ENCODE measurements at regions of chr6 and their contacts with region 1.

Region 1: DNA sequence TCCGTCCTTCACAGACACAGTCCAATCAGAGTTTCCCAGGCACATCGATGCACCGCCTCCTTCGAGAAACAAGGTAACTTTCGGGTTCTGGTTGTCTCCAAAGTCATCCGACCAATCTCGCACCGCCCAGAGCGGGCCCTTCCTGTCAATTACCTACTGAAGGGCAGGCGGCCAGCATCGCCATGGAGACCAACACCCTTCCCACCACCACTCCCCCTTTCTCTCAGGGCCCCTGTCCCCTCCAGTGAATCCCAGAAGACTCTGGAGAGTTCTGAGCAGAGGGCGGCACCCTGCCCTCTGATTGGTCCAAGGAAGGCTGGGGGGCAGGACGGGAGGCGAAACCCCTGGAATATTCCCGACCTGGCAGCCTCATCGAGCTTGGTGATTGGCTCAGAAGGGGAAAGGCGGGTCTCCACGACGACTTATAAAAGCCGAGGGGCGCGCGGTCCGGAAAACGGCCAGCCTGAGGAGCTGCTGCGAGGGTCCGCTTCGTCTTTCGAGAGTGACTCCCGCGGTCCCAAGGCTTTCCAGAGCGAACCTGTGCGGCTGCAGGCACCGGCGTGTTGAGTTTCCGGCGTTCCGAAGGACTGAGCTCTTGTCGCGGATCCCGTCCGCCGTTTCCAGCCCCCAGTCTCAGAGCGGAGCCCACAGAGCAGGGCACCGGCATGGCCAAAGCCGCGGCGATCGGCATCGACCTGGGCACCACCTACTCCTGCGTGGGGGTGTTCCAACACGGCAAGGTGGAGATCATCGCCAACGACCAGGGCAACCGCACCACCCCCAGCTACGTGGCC is at the start of gene HSPA1B:
- DNase-seq: peak; percentile 99 to 100 (median 100)
- ATAC-seq: peak; percentile 86
- H3K4me3 ChIP-seq: peak within 1 kb of the TSS; percentile 56
- H3K27ac ChIP-seq: peak within 1 kb of the TSS; percentile 78
- H3K4me1 ChIP-seq: peaks cover 41% of the 10 kb centered on the region in 2 experiments
- H3K27me3 ChIP-seq: no peaks in the 10 kb centered on the region
- CTCF ChIP-seq: peak in 1 of 3 experiments; percentile 15; a peak in 2 of 6 replicates
- EP300 ChIP-seq: peak; percentile 89
- POLR2A ChIP-seq: peak; percentile 100
- RAD21 ChIP-seq: peak; percentile 34 to 39; a peak in 2 of 4 replicates
- polyA plus RNA-seq, gene HSPA1B: 0.27 to 0.62 TPM

Region 2: GRCh38 chr6:31652925-31653718 is 174.4 kb before region 1 on chr6:
- CTCF ChIA-PET with region 1: no interaction called
- POLR2A ChIA-PET with region 1: interaction called, 16 read pairs
- in situ Hi-C with region 1: no loop called
- intact Hi-C with region 1: no loop called
- DNase-seq: peak; percentile 94 to 99 (median 96)
- ATAC-seq: peak; percentile 83
- H3K4me3 ChIP-seq: peak overlapping the region; percentile 73
- H3K27ac ChIP-seq: peak overlapping the region; percentile 98
- H3K4me1 ChIP-seq: peaks cover 22 to 26% of the 10 kb centered on the region in 2 experiments
- H3K27me3 ChIP-seq: no peaks in the 10 kb centered on the region
- CTCF ChIP-seq: peak; percentile 43 to 72 (median 54)
- EP300 ChIP-seq: no peak; the same call in 1 of the 2 replicates
- POLR2A ChIP-seq: peak; percentile 98
- RAD21 ChIP-seq: peak in 1 of 2 experiments; percentile 52; a peak in 2 of 4 replicates

Region 3: GRCh38 chr6:31729515-31729978 is 97.9 kb before region 1 on chr6:
- CTCF ChIA-PET with region 1: no interaction called
- POLR2A ChIA-PET with region 1: interaction called, 13 read pairs
- in situ Hi-C with region 1: no loop called
- intact Hi-C with region 1: loop called (anchors 2 kb)
- DNase-seq: peak; percentile 91 to 97 (median 94)
- ATAC-seq: peak; percentile 84
- H3K4me3 ChIP-seq: peak overlapping the region; percentile 65
- H3K27ac ChIP-seq: peak overlapping the region; percentile 75
- H3K4me1 ChIP-seq: peaks cover 53 to 67% of the 10 kb centered on the region in 2 experiments
- H3K27me3 ChIP-seq: no peaks in the 10 kb centered on the region
- CTCF ChIP-seq: peak; percentile 12 to 99 (median 95); a peak in 5 of 6 replicates
- EP300 ChIP-seq: no peak; the same call in 1 of the 2 replicates
- POLR2A ChIP-seq: no peak; the same call in 1 of the 2 replicates
- RAD21 ChIP-seq: peak; percentile 99

Region 4: DNA sequence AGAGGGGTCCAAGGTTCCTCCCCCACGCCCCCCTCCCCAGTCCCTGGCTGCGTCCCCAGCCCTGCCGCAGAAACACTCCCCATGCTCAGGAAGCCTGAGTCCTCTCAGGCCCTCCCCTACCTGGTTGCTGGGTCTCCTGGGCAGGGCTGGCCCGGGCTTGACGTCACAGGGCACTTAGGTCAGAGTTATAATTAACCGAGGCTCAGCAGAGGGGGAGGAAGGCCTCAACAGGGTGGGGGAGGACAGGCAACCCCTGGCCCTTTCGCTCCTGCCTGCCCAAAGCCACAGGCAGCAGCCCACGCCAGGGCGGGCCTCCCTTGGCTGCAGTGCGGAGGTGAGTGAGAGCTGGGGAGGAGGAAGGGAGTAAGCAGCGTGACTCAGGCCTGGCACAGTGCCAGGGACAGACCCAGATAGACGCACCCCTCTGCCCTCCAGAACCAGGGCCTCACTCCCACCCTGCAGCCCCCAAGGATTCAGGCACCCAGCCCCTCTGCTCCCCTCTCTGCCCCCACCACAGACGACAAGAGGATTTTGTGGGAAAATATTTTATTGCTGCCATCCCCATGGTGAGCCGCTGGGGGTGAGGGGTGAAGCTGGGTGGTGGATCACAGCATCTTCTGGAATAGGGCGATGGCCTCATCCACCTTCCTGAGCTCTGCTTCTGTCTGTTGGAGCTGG is 50.4 kb before region 1 on chr6 and contains the start of gene VWA7:
- CTCF ChIA-PET with region 1: interaction called, 10 read pairs
- POLR2A ChIA-PET with region 1: interaction called, 38 read pairs
- in situ Hi-C with region 1: no loop called
- intact Hi-C with region 1: loop called (anchors 1 kb)
- DNase-seq: peak; percentile 98 to 99 (median 99)
- ATAC-seq: peak; percentile 91
- H3K4me3 ChIP-seq: peak within 1 kb of the TSS; percentile 10; the same call in 1 of the 2 replicates
- H3K27ac ChIP-seq: peak within 1 kb of the TSS; percentile 87
- H3K4me1 ChIP-seq: peaks cover 43 to 85% of the 10 kb centered on the region in 2 experiments
- H3K27me3 ChIP-seq: no peaks in the 10 kb centered on the region
- CTCF ChIP-seq: peak; percentile 14 to 44 (median 24); a peak in 2 of 6 replicates
- EP300 ChIP-seq: peak; percentile 88
- POLR2A ChIP-seq: peak; percentile 84; the same call in 1 of the 2 replicates
- RAD21 ChIP-seq: peak; percentile 46 to 80
- polyA plus RNA-seq, gene VWA7: 0.18 to 0.32 TPM

Region 5: DNA sequence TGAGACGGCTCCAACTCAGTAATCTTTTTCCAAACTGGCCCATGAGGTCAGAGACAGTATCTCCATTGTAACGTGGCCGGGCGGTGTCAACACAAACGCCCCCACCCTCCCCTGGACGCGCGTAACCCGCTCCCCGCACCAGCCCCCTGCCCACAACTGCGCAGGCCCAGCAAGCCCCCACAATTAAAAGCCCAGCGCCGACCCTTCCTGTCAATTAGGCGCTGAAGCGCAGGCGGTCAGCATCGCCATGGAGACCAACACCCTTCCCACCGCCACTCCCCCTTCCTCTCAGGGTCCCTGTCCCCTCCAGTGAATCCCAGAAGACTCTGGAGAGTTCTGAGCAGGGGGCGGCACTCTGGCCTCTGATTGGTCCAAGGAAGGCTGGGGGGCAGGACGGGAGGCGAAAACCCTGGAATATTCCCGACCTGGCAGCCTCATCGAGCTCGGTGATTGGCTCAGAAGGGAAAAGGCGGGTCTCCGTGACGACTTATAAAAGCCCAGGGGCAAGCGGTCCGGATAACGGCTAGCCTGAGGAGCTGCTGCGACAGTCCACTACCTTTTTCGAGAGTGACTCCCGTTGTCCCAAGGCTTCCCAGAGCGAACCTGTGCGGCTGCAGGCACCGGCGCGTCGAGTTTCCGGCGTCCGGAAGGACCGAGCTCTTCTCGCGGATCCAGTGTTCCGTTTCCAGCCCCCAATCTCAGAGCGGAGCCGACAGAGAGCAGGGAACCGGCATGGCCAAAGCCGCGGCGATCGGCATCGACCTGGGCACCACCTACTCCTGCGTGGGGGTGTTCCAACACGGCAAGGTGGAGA is 12.3 kb before region 1 on chr6 and contains the starts of genes HSPA1A and HSPA1L:
- CTCF ChIA-PET with region 1: no interaction called
- POLR2A ChIA-PET with region 1: interaction called, 93 read pairs
- in situ Hi-C with region 1: no loop called
- intact Hi-C with region 1: no loop called
- DNase-seq: peak; percentile 97 to 100 (median 98)
- ATAC-seq: peak; percentile 73
- H3K4me3 ChIP-seq: peak within 1 kb of the TSS; percentile 54
- H3K27ac ChIP-seq: peak within 1 kb of the TSS; percentile 97
- H3K4me1 ChIP-seq: peaks cover 29 to 37% of the 10 kb centered on the region in 2 experiments
- H3K27me3 ChIP-seq: no peaks in the 10 kb centered on the region
- CTCF ChIP-seq: 0 out of 6 replicates have a peak, but pooled peaks of 1 of the 3 experiments have one; percentile 1
- EP300 ChIP-seq: peak; percentile 85
- POLR2A ChIP-seq: peak; percentile 100
- RAD21 ChIP-seq: peak; percentile 16 to 30; a peak in 3 of 4 replicates
- polyA plus RNA-seq, gene HSPA1A: 2.2 to 4.1 TPM
- polyA plus RNA-seq, gene HSPA1L: 0.14 to 0.34 TPM

Region 6: GRCh38 chr6:32177788-32178546 is 350.5 kb after region 1 on chr6 and contains the start of gene RNF5:
- CTCF ChIA-PET with region 1: no interaction called
- POLR2A ChIA-PET with region 1: interaction called, 3 read pairs
- in situ Hi-C with region 1: no loop called
- intact Hi-C with region 1: loop called (anchors 10 kb)
- DNase-seq: peak; percentile 95 to 100 (median 97)
- ATAC-seq: peak; percentile 85
- H3K4me3 ChIP-seq: peak within 1 kb of the TSS; percentile 88
- H3K27ac ChIP-seq: peak within 1 kb of the TSS; percentile 94
- H3K4me1 ChIP-seq: peaks cover 40 to 65% of the 10 kb centered on the region in 2 experiments
- H3K27me3 ChIP-seq: no peaks in the 10 kb centered on the region
- CTCF ChIP-seq: no peak
- EP300 ChIP-seq: no peak; the same call in 1 of the 2 replicates
- POLR2A ChIP-seq: peak; percentile 77
- RAD21 ChIP-seq: no peak
- polyA plus RNA-seq, gene RNF5: 62.2 to 95.5 TPM

Measured in K562 (cell line).